Sigmoid colon (tissue), 7 donors: ENCODE measurements at regions of chr1 and their contacts with region 1.

Region 1: GRCh38 chr1:201660931-201661822 is 122.2 kb downstream of the NAV1 start:
- DNase-seq: no peak
- H3K4me3 ChIP-seq: no peak overlapping the region
- H3K27ac ChIP-seq: no peak overlapping the region
- H3K4me1 ChIP-seq: peaks cover 0 to 17% (median 8%) of the 10 kb centered on the region in 4 donors
- H3K27me3 ChIP-seq: no peaks in the 10 kb centered on the region
- CTCF ChIP-seq: no peak
- EP300 ChIP-seq: no peak
- POLR2A ChIP-seq: no peak

Region 2: GRCh38 chr1:201713085-201713810 is 52.1 kb after region 1 on chr1:
- intact Hi-C with region 1: no loop called
- DNase-seq: peak; percentile 100
- H3K4me3 ChIP-seq: no peak overlapping the region
- H3K27ac ChIP-seq: peak overlapping the region; percentile 84 to 96 (median 90)
- H3K4me1 ChIP-seq: peaks cover 0 to 88% (median 72%) of the 10 kb centered on the region in 4 donors
- H3K27me3 ChIP-seq: no peaks in the 10 kb centered on the region
- CTCF ChIP-seq: no peak
- EP300 ChIP-seq: peak in 2 of 4 donors; percentile 91 to 93
- POLR2A ChIP-seq: no peak

Region 3: GRCh38 chr1:203239526-203240305 is 1578.5 kb after region 1 on chr1:
- intact Hi-C with region 1: loop called (anchors 10 kb)
- DNase-seq: no peak
- H3K4me3 ChIP-seq: no peak overlapping the region
- H3K27ac ChIP-seq: no peak overlapping the region
- H3K4me1 ChIP-seq: no peaks in the 10 kb centered on the region
- H3K27me3 ChIP-seq: no peaks in the 10 kb centered on the region
- CTCF ChIP-seq: no peak
- EP300 ChIP-seq: no peak
- POLR2A ChIP-seq: no peak